PC-9 (cell line): ENCODE measurements at regions of chr12 and their contacts with region 1.

Region 1: GRCh38 chr12:113683574-113684384 is 212.1 kb upstream of the LHX5 start:
- DNase-seq: no peak
- H3K4me3 ChIP-seq: no peak overlapping the region
- H3K27ac ChIP-seq: no peak overlapping the region
- H3K4me1 ChIP-seq: no peaks in the 10 kb centered on the region
- H3K27me3 ChIP-seq: no peaks in the 10 kb centered on the region
- CTCF ChIP-seq: no peak

Region 2: GRCh38 chr12:113899561-113900471 is 216.0 kb after region 1 on chr12:
- CTCF ChIA-PET with region 1: no interaction called
- POLR2A ChIA-PET with region 1: interaction called, 10 read pairs
- intact Hi-C with region 1: no loop called
- DNase-seq: peak in 1 of 2 experiments; percentile 12
- H3K4me3 ChIP-seq: no peak overlapping the region
- H3K27ac ChIP-seq: no peak overlapping the region
- H3K4me1 ChIP-seq: no peaks in the 10 kb centered on the region
- H3K27me3 ChIP-seq: no peaks in the 10 kb centered on the region
- CTCF ChIP-seq: no peak